Posterior cingulate gyrus (tissue), 11 donors: ENCODE measurements at regions of chr5 and their contacts with region 1.

Region 1: GRCh38 chr5:34656001-34656699 is at the start of gene RAI14:
- DNase-seq: peak; percentile 45 to 94 (median 60)

Region 2: DNA sequence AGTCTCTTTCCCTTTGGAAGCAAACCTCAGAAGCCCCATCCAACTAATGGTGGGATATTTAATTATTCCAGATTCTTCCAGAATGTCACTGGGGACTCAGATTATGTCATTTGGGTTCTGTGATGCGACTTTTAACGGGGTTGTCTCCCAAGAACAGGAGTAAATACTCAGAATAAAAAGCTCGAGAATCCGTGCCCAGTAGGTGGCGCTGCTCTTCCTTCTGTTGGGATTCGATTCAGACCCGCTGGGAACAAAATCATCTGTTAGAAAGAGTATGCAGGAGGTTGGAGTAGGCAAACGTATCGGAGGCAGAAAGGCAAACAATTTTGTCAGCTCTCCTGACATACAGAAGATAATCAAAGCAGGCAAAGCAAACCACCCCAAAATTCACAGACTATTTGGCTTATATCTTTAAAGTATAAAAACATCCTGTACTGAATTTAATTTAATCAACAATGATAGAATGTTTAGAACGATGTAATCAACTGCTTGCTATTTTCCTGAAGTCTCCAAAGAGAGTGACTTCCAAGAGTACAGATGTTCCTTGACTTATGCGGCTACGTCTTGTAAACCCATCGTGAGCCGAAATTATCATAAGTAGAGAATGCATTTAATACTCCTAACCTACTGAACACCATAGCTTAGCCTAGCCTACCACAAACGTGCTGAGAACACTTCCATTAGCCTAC is 169.8 kb before region 1 on chr5:
- intact Hi-C with region 1: loop called (anchors 5 kb)
- DNase-seq: peak; percentile 69 to 97 (median 88)

Region 3: GRCh38 chr5:34626036-34626754 is 30.0 kb before region 1 on chr5:
- intact Hi-C with region 1: no loop called
- DNase-seq: no peak

Region 4: GRCh38 chr5:34838785-34839714 is 182.9 kb after region 1 on chr5 and contains the start of gene TTC23L:
- intact Hi-C with region 1: loop called (anchors 10 kb)
- DNase-seq: peak; percentile 70 to 98 (median 87)

Region 5: GRCh38 chr5:35117967-35118366 is 461.8 kb after region 1 on chr5:
- intact Hi-C with region 1: no loop called
- DNase-seq: no peak